CD4-positive, alpha-beta T cell (primary cell): ENCODE measurements at regions of chr2 and their contacts with region 1.

Region 1: GRCh38 chr2:201451292-201452057 is at the starts of genes STRADB and TRAK2:
- DNase-seq: peak; percentile 87 to 98 (median 92)
- ATAC-seq: peak; percentile 84
- H3K4me3 ChIP-seq: peak within 1 kb of the TSS; percentile 90
- H3K4me3 Mint-ChIP-seq: peak within 1 kb of the TSS; percentile 97
- H3K27ac ChIP-seq: peak within 1 kb of the TSS; percentile 83 to 85
- H3K27ac Mint-ChIP-seq: peak within 1 kb of the TSS; percentile 98
- H3K4me1 ChIP-seq: peaks cover 44% of the 10 kb centered on the region
- H3K4me1 Mint-ChIP-seq: peaks cover 61% of the 10 kb centered on the region
- H3K27me3 ChIP-seq: no peaks in the 10 kb centered on the region
- H3K27me3 Mint-ChIP-seq: no peaks in the 10 kb centered on the region
- CTCF ChIP-seq: no peak
- total RNA-seq, gene STRADB: 4.2 to 5.6 TPM
- total RNA-seq, gene TRAK2: 32.5 to 35.6 TPM

Region 2: GRCh38 chr2:200901459-200902072 is 549.9 kb before region 1 on chr2:
- CTCF ChIA-PET with region 1: no interaction called
- POLR2A ChIA-PET with region 1: interaction called, 3 read pairs
- intact Hi-C with region 1: loop called in 1 of 2 experiments (anchors 10 kb)
- DNase-seq: peak; percentile 42 to 91 (median 57)
- ATAC-seq: peak; percentile 100
- H3K4me3 ChIP-seq: no peak overlapping the region
- H3K4me3 Mint-ChIP-seq: no peak overlapping the region
- H3K27ac ChIP-seq: no peak overlapping the region
- H3K27ac Mint-ChIP-seq: peak overlapping the region; percentile 21
- H3K4me1 ChIP-seq: no peaks in the 10 kb centered on the region
- H3K4me1 Mint-ChIP-seq: peaks cover 6% of the 10 kb centered on the region
- H3K27me3 ChIP-seq: no peaks in the 10 kb centered on the region
- H3K27me3 Mint-ChIP-seq: no peaks in the 10 kb centered on the region
- CTCF ChIP-seq: peak; percentile 84

Region 3: DNA sequence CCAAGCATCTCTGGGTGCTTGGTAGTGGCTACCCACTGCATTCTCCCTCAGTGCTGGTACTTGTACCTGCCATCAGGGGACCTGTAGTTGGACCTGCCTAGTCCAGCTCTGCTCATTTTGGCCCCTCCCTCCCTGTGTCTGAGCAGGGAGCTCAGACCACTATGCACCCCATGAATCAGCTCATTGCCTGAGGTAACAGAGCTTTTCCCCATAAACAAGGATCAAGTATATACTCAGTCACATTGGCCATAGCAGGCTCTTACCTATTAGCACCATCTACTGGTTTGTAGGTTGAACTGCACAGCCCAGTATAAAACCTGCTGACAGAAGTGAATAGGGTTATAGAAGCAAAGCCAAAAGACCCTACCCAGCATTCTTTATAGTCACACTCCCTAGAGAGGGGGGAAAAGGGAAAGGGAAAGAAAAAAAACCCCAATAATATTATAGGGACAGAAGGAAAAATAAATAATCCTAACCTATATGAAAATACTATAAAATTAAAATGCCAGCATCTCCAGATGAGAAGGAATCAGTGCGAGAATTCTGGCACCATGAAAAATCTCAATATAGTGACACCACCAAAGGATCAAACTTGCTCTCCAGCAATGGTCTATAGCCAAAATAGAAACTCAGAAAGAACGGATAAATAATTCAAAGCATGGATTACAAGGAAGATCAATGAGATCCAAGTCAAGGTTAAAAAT is 87.5 kb before region 1 on chr2:
- CTCF ChIA-PET with region 1: interaction called, 3 read pairs
- POLR2A ChIA-PET with region 1: interaction called, 10 read pairs
- intact Hi-C with region 1: no loop called
- DNase-seq: peak in 7 of 14 experiments; percentile 3 to 75 (median 48)
- ATAC-seq: peak; percentile 97
- H3K4me3 ChIP-seq: no peak overlapping the region
- H3K4me3 Mint-ChIP-seq: no peak overlapping the region
- H3K27ac ChIP-seq: no peak overlapping the region
- H3K27ac Mint-ChIP-seq: peak overlapping the region; percentile 28
- H3K4me1 ChIP-seq: peaks cover 17% of the 10 kb centered on the region
- H3K4me1 Mint-ChIP-seq: peaks cover 36% of the 10 kb centered on the region
- H3K27me3 ChIP-seq: no peaks in the 10 kb centered on the region
- H3K27me3 Mint-ChIP-seq: no peaks in the 10 kb centered on the region
- CTCF ChIP-seq: peak; percentile 95

Region 4: DNA sequence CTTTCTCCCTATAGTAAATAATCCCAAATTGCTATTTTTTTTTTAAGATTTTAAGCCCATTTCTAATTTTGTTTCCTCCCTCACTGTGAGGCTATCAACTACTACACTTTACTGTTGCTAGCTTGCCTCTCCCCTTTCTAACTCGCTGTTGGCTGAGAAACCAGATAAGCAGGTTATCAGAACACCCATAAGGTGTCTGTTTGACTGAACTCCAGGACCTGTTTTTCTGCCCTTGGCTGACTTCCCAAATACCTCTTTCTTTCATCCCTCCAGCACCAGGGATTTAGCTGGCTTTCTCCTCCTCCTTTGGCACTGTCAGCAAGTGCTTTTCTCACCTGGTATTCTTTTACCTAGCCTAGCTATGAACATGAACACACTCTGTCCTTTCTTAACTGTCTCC is 11.3 kb before region 1 on chr2:
- CTCF ChIA-PET with region 1: interaction called, 28 read pairs
- POLR2A ChIA-PET with region 1: interaction called, 48 read pairs
- intact Hi-C with region 1: no loop called
- DNase-seq: no peak
- ATAC-seq: no peak
- H3K4me3 ChIP-seq: no peak overlapping the region
- H3K4me3 Mint-ChIP-seq: no peak overlapping the region
- H3K27ac ChIP-seq: no peak overlapping the region
- H3K27ac Mint-ChIP-seq: no peak overlapping the region
- H3K4me1 ChIP-seq: no peaks in the 10 kb centered on the region
- H3K4me1 Mint-ChIP-seq: peaks cover 57% of the 10 kb centered on the region
- H3K27me3 ChIP-seq: no peaks in the 10 kb centered on the region
- H3K27me3 Mint-ChIP-seq: no peaks in the 10 kb centered on the region
- CTCF ChIP-seq: no peak

Region 5: GRCh38 chr2:202033321-202034248 is 582.1 kb after region 1 on chr2 and contains the start of gene FZD7:
- CTCF ChIA-PET with region 1: no interaction called
- POLR2A ChIA-PET with region 1: no interaction called
- intact Hi-C with region 1: loop called in 1 of 2 experiments (anchors 5 kb)
- DNase-seq: peak; percentile 69 to 91 (median 82)
- ATAC-seq: peak; percentile 78
- H3K4me3 ChIP-seq: peak within 1 kb of the TSS; percentile 95
- H3K4me3 Mint-ChIP-seq: peak within 1 kb of the TSS; percentile 94
- H3K27ac ChIP-seq: no peak within 1 kb of the TSS
- H3K27ac Mint-ChIP-seq: peak within 1 kb of the TSS; percentile 45
- H3K4me1 ChIP-seq: peaks cover 31% of the 10 kb centered on the region
- H3K4me1 Mint-ChIP-seq: peaks cover 12% of the 10 kb centered on the region
- H3K27me3 ChIP-seq: peaks cover 17 to 30% of the 10 kb centered on the region in 2 experiments
- H3K27me3 Mint-ChIP-seq: peaks cover 9% of the 10 kb centered on the region
- CTCF ChIP-seq: no peak
- total RNA-seq, gene FZD7: 0.17 to 0.25 TPM